ENCODE measurements at regions of chr1 and their contacts with region 1.

Region 1: GRCh38 chr1:175373786-175374623 is 181.4 kb upstream of the KIAA0040 start:
- DNase-seq: peak; percentile 58
- ATAC-seq: peak; percentile 63

Region 2: GRCh38 chr1:174836543-174836942 is 537.5 kb before region 1 on chr1:
- intact Hi-C with region 1: no loop called
- DNase-seq: no peak
- ATAC-seq: no peak

Region 3: DNA sequence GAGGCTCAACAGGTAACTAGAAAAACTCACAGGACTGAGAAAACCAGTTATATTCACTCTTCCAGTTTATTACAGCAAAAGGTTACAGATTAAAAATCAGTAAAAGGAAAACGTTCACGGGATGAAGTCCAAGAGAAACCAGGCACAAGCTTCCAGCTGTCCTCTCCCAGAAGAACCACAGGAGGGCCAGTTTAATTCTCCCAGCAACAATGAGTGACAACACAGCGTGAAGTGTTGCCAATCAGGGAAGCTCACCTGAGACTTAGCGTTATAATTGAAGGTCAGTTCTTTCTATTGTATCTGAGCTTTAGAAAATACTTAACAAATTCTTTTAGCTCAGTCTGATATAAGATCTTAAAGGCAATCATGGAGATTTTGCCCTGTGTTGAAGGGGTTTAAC is 434.6 kb after region 1 on chr1:
- intact Hi-C with region 1: no loop called
- DNase-seq: no peak
- ATAC-seq: no peak

Region 4: GRCh38 chr1:175887981-175888433 is 514.0 kb after region 1 on chr1:
- intact Hi-C with region 1: loop called (anchors 2 kb)
- DNase-seq: peak; percentile 75
- ATAC-seq: peak; percentile 83

Region 5: GRCh38 chr1:176073524-176074157 is 699.6 kb after region 1 on chr1:
- intact Hi-C with region 1: loop called (anchors 5 kb)
- DNase-seq: no peak
- ATAC-seq: peak; percentile 54

Measured in Right ventricle myocardium inferior (tissue), 1 donor.